Keratinocyte (primary cell): ENCODE measurements at regions of chr12 and their contacts with region 1.

Region 1: DNA sequence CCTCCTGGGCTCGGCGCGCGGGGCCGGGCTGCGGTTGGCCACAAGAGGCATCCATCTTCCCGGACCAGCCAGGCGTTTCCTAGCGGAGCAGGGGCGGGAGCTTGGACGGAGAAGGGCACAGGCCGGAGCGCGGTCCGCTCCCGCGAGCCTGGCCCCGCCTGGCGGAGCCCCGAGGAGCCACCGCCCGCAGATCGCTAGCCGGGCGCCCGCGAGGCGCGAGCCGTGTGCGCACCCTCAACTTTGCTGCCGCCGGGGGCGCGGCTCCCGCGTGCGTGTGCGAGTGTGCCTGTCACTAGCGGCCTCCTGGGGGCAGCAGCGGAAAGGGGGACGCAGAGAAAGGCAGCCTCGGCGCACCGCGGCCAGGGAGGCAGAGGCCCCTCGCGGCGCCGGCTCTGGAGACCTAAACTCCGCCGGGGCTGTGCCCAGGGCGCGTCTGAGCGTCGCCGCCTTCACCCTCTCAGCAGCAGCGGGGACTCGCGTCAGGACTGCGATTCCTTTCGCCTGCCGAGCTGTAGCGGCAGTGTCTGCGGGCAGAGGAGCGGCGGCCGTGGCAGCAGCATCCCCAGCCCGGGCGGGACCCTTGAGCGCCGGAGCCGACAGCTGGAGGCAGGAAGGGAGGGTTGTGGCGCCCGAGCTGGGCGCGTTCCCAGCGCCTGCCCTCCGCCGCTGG is 644 bp upstream of the SRGAP1 start:
- DNase-seq: no peak
- H3K4me3 ChIP-seq: peak overlapping the region; percentile 97 to 100 (median 100)
- H3K27ac ChIP-seq: peak overlapping the region; percentile 85
- H3K4me1 ChIP-seq: peaks cover 20% of the 10 kb centered on the region
- H3K27me3 ChIP-seq: no peaks in the 10 kb centered on the region
- CTCF ChIP-seq: peak; percentile 70 to 98 (median 90)

Region 2: GRCh38 chr12:63779498-63780481 is 64.1 kb before region 1 on chr12 and contains the start of gene RXYLT1:
- dilution Hi-C with region 1: no loop called
- DNase-seq: no peak
- H3K4me3 ChIP-seq: peak within 1 kb of the TSS; percentile 85 to 90 (median 86)
- H3K27ac ChIP-seq: peak within 1 kb of the TSS; percentile 79
- H3K4me1 ChIP-seq: peaks cover 10% of the 10 kb centered on the region
- H3K27me3 ChIP-seq: no peaks in the 10 kb centered on the region
- CTCF ChIP-seq: no peak
- polyA plus RNA-seq, gene RXYLT1: 10.2 to 17.0 TPM (median 16.5 TPM) in 3 replicates

Region 3: GRCh38 chr12:63882844-63883243 is 39.0 kb after region 1 on chr12:
- dilution Hi-C with region 1: no loop called
- DNase-seq: no peak
- H3K4me3 ChIP-seq: no peak overlapping the region
- H3K27ac ChIP-seq: no peak overlapping the region
- H3K4me1 ChIP-seq: peaks cover 5% of the 10 kb centered on the region
- H3K27me3 ChIP-seq: no peaks in the 10 kb centered on the region
- CTCF ChIP-seq: no peak

Region 4: GRCh38 chr12:64256166-64256800 is 412.4 kb after region 1 on chr12:
- dilution Hi-C with region 1: loop called (anchors 25 kb)
- DNase-seq: peak; percentile 4
- H3K4me3 ChIP-seq: no peak overlapping the region
- H3K27ac ChIP-seq: no peak overlapping the region
- H3K4me1 ChIP-seq: no peaks in the 10 kb centered on the region
- H3K27me3 ChIP-seq: no peaks in the 10 kb centered on the region
- CTCF ChIP-seq: peak in 2 of 3 experiments; percentile 41 to 54